CD8-positive, alpha-beta T cell (primary cell): ENCODE measurements at regions of chr4 and their contacts with region 1.

Region 1: GRCh38 chr4:140373328-140374129 is at the start of gene SCOC:
- DNase-seq: peak; percentile 90 to 98 (median 95)
- ATAC-seq: peak; percentile 94
- H3K4me3 ChIP-seq: peak within 1 kb of the TSS; percentile 85 to 92
- H3K4me3 Mint-ChIP-seq: no peak within 1 kb of the TSS
- H3K27ac ChIP-seq: peak within 1 kb of the TSS; percentile 81 to 85
- H3K27ac Mint-ChIP-seq: peak within 1 kb of the TSS; percentile 76
- H3K4me1 ChIP-seq: peaks cover 20% of the 10 kb centered on the region
- H3K4me1 Mint-ChIP-seq: peaks cover 37% of the 10 kb centered on the region
- H3K27me3 ChIP-seq: no peaks in the 10 kb centered on the region
- H3K27me3 Mint-ChIP-seq: no peaks in the 10 kb centered on the region
- CTCF ChIP-seq: no peak
- total RNA-seq, gene SCOC: 7.1 to 8.3 TPM

Region 2: DNA sequence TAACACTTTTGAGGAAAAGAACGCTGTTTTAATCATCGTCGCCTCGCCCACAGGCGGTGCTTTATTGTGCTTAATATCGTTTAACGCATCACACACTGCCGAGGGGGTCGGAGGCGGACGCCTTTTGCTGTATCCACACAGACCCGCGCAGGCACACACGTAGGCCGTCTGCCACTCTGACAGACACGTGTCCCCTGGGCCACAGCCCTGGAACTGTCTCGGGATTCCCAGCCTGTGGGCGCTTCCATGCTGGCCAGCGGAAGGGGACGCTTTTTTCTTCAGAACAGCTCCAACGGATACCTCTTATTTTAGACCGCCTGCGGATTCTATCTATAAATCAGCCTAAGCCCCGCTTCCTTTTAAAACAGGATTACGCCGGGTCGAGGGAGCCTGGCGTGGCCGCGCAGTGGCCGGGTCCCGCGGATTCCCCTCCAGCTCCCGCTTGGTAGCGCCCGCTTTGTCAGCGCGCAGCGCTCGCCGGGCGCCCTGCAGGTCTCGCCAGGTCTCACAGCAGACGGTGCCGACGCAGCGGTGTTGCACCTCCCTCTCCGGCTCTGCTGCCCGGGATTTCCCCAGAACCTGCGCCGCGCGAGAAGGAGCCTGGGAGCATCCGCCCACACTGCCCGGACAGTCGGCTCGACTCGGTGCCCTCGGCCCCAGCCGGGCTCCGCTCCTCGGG is 1358.1 kb before region 1 on chr4 and contains the start of gene NOCT:
- CTCF ChIA-PET with region 1: no interaction called
- POLR2A ChIA-PET with region 1: no interaction called
- intact Hi-C with region 1: loop called (anchors 10 kb)
- DNase-seq: peak; percentile 76 to 98 (median 90)
- ATAC-seq: peak; percentile 86
- H3K4me3 ChIP-seq: peak within 1 kb of the TSS; percentile 52 to 67
- H3K4me3 Mint-ChIP-seq: peak within 1 kb of the TSS; percentile 91
- H3K27ac ChIP-seq: peak within 1 kb of the TSS; percentile 75 to 92
- H3K27ac Mint-ChIP-seq: peak within 1 kb of the TSS; percentile 99
- H3K4me1 ChIP-seq: peaks cover 7% of the 10 kb centered on the region
- H3K4me1 Mint-ChIP-seq: peaks cover 30% of the 10 kb centered on the region
- H3K27me3 ChIP-seq: no peaks in the 10 kb centered on the region
- H3K27me3 Mint-ChIP-seq: no peaks in the 10 kb centered on the region
- CTCF ChIP-seq: no peak
- total RNA-seq, gene NOCT: 45.7 to 49.6 TPM

Region 3: DNA sequence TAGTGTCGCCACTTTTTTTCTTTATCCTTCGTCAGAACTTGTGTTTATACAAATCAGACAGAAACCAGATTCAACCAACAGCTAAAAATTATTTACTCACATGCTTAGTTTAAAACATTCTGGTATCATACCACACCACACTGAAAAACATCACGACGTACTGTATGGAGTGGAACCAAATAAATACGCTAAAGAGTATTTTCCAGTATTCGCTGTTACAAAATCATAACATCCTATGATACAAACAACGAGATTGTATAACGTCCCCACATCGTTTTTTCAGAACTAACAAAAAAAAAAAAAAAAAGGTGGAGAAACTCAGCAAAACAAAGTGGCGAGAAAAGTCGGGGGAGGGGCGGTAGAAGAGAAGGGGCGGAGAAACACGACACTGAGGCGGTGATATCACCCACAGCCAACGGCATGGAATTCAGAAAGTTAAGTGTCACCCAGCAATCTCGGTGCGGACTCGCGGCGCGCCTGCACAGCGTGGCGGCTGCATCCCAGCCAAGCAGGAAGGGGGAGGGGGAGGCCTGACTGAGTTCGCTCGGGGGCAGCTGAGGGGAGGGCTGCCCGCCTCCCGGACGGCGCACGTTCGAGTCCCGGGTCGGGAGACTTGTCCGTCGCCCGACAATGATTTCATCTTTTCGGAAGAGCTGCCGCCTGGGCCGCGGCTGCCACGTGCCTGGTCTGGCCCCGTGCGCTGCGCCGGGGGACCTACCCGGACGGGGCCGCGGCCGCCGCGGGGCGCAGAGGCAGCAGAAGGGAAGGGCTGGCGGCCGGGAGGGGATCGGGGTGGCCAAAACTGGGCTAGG is 818.4 kb before region 1 on chr4:
- CTCF ChIA-PET with region 1: no interaction called
- POLR2A ChIA-PET with region 1: no interaction called
- intact Hi-C with region 1: loop called in 1 of 2 experiments (anchors 10 kb)
- DNase-seq: peak; percentile 43 to 89 (median 74)
- ATAC-seq: peak; percentile 75
- H3K4me3 ChIP-seq: peak overlapping the region; percentile 79 to 84
- H3K4me3 Mint-ChIP-seq: peak overlapping the region; percentile 94
- H3K27ac ChIP-seq: peak overlapping the region in 1 of 2 experiments; percentile 53
- H3K27ac Mint-ChIP-seq: peak overlapping the region; percentile 95
- H3K4me1 ChIP-seq: peaks cover 9% of the 10 kb centered on the region
- H3K4me1 Mint-ChIP-seq: peaks cover 31% of the 10 kb centered on the region
- H3K27me3 ChIP-seq: peaks cover 0 to 9% of the 10 kb centered on the region in 2 experiments
- H3K27me3 Mint-ChIP-seq: peaks cover 9% of the 10 kb centered on the region
- CTCF ChIP-seq: no peak

Region 4: GRCh38 chr4:139913398-139913990 is 460.0 kb before region 1 on chr4:
- CTCF ChIA-PET with region 1: no interaction called
- POLR2A ChIA-PET with region 1: no interaction called
- intact Hi-C with region 1: no loop called
- DNase-seq: no peak
- ATAC-seq: no peak
- H3K4me3 ChIP-seq: no peak overlapping the region
- H3K4me3 Mint-ChIP-seq: no peak overlapping the region
- H3K27ac ChIP-seq: no peak overlapping the region
- H3K27ac Mint-ChIP-seq: no peak overlapping the region
- H3K4me1 ChIP-seq: no peaks in the 10 kb centered on the region
- H3K4me1 Mint-ChIP-seq: no peaks in the 10 kb centered on the region
- H3K27me3 ChIP-seq: no peaks in the 10 kb centered on the region
- H3K27me3 Mint-ChIP-seq: no peaks in the 10 kb centered on the region
- CTCF ChIP-seq: no peak

Region 5: DNA sequence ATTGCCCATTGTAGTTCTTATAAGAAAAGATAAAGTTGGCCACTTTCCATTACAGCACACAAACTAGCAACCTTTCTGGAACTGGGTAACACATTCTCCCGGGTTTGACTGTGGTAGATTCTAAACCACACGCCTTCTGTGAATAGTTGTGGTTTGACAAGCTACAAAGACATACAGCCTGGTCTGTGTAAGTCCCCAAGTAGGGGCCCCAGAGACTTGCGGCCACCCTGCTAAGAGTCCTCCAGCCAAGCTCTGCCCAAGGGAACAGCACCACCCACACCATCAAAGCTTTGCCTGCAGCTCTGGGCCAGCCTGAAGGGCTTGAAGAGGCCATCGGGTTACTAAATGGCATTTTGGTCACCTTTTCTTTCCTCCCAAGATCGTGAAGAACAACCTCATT is 423.0 kb before region 1 on chr4:
- CTCF ChIA-PET with region 1: no interaction called
- POLR2A ChIA-PET with region 1: no interaction called
- intact Hi-C with region 1: no loop called
- DNase-seq: peak in 3 of 9 experiments; percentile 20 to 62 (median 42)
- ATAC-seq: no peak
- H3K4me3 ChIP-seq: no peak overlapping the region
- H3K4me3 Mint-ChIP-seq: no peak overlapping the region
- H3K27ac ChIP-seq: peak overlapping the region in 1 of 2 experiments; percentile 19
- H3K27ac Mint-ChIP-seq: no peak overlapping the region
- H3K4me1 ChIP-seq: peaks cover 13% of the 10 kb centered on the region
- H3K4me1 Mint-ChIP-seq: peaks cover 31% of the 10 kb centered on the region
- H3K27me3 ChIP-seq: peaks cover 0 to 3% of the 10 kb centered on the region in 2 experiments
- H3K27me3 Mint-ChIP-seq: no peaks in the 10 kb centered on the region
- CTCF ChIP-seq: no peak

Region 6: DNA sequence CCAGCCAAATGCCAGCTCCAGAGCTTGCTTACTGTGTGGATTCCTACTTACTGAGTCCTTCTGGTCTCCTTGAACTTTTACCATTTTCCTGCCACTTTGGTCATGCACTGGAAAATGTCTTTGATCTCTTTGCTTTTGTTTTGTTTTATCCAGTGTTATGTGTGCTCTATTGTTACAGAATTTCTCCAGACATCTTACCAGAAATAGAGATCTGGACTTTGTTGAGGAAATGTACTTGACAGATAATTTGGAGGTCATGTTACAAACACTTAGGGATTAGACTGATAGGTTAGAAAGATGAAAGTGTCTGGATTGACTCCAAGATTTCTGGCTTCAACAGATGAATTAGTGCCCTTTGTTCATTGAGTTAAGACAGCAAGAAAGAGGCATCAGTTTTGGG is 841.5 kb after region 1 on chr4:
- CTCF ChIA-PET with region 1: no interaction called
- POLR2A ChIA-PET with region 1: no interaction called
- intact Hi-C with region 1: loop called (anchors 5 to 10 kb)
- DNase-seq: no peak
- ATAC-seq: no peak
- H3K4me3 ChIP-seq: no peak overlapping the region
- H3K4me3 Mint-ChIP-seq: no peak overlapping the region
- H3K27ac ChIP-seq: no peak overlapping the region
- H3K27ac Mint-ChIP-seq: no peak overlapping the region
- H3K4me1 ChIP-seq: no peaks in the 10 kb centered on the region
- H3K4me1 Mint-ChIP-seq: peaks cover 1% of the 10 kb centered on the region
- H3K27me3 ChIP-seq: no peaks in the 10 kb centered on the region
- H3K27me3 Mint-ChIP-seq: peaks cover 13% of the 10 kb centered on the region
- CTCF ChIP-seq: no peak

Region 7: DNA sequence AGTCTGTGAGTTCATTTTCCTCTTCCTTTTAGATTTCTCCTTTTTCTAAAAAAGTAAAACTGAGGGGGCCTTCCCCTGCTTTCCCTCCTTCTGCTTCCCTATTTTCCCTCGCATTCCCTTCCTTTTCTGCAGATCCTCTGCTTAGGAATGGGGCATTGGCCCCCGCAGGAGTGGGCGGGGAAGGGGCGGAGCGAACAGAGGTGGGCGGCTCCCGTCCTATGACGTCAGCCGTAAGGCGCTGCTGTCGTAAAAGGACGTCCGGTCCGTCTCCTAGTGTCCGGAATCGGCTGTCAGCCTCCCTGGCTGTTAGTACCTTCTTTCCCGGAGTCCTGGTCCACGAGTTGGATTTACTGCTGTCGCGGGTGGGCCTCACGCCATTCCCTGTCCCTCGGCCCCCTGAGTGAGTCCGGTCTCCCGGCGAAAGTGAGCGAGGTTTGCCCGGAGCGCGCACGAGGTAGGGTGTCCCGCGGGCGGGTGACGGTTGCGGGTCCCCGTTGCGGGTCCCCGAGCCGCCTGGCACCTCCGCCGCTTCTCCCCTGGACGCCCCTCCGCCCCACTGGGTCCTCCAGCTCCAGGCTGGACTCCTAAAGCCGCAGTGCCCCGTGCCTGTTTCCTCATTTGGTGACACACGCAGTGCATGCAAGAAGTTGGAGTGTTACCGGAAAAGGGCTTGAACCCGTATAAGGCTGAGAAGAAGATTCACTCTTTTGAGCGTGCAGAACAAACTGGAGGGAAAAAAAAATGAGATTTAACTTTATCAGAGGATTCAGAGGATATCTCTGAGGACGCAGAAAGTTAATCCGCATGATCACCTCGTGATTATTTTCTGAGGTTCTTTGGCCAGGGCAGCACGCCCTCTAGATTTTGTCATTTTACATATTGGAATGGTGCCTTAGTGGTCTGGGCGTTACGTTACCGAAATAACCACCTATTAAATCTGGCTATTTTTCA is 847.4 kb after region 1 on chr4 and contains the start of gene ZNF330:
- CTCF ChIA-PET with region 1: no interaction called
- POLR2A ChIA-PET with region 1: no interaction called
- intact Hi-C with region 1: loop called (anchors 5 to 10 kb)
- DNase-seq: peak; percentile 79 to 95 (median 87)
- ATAC-seq: peak; percentile 91
- H3K4me3 ChIP-seq: peak within 1 kb of the TSS; percentile 88 to 91
- H3K4me3 Mint-ChIP-seq: peak within 1 kb of the TSS; percentile 95
- H3K27ac ChIP-seq: peak within 1 kb of the TSS; percentile 92
- H3K27ac Mint-ChIP-seq: peak within 1 kb of the TSS; percentile 96
- H3K4me1 ChIP-seq: peaks cover 18% of the 10 kb centered on the region
- H3K4me1 Mint-ChIP-seq: peaks cover 48% of the 10 kb centered on the region
- H3K27me3 ChIP-seq: no peaks in the 10 kb centered on the region
- H3K27me3 Mint-ChIP-seq: peaks cover 2% of the 10 kb centered on the region
- CTCF ChIP-seq: no peak
- total RNA-seq, gene ZNF330: 44.1 to 44.9 TPM